Gastrocnemius medialis (tissue), 4 donors: ENCODE measurements at regions of chr10 and their contacts with region 1.

Region 1: GRCh38 chr10:71708301-71708703 is 11.3 kb downstream of the C10orf105 start:
- DNase-seq: no peak
- ATAC-seq: no peak
- H3K4me3 ChIP-seq: no peak overlapping the region
- H3K27ac ChIP-seq: no peak overlapping the region
- H3K4me1 ChIP-seq: peaks cover 11 to 14% of the 10 kb centered on the region in 2 donors
- H3K27me3 ChIP-seq: no peaks in the 10 kb centered on the region
- CTCF ChIP-seq: peak; percentile 71 to 84 (median 75)
- POLR2A ChIP-seq: no peak

Region 2: DNA sequence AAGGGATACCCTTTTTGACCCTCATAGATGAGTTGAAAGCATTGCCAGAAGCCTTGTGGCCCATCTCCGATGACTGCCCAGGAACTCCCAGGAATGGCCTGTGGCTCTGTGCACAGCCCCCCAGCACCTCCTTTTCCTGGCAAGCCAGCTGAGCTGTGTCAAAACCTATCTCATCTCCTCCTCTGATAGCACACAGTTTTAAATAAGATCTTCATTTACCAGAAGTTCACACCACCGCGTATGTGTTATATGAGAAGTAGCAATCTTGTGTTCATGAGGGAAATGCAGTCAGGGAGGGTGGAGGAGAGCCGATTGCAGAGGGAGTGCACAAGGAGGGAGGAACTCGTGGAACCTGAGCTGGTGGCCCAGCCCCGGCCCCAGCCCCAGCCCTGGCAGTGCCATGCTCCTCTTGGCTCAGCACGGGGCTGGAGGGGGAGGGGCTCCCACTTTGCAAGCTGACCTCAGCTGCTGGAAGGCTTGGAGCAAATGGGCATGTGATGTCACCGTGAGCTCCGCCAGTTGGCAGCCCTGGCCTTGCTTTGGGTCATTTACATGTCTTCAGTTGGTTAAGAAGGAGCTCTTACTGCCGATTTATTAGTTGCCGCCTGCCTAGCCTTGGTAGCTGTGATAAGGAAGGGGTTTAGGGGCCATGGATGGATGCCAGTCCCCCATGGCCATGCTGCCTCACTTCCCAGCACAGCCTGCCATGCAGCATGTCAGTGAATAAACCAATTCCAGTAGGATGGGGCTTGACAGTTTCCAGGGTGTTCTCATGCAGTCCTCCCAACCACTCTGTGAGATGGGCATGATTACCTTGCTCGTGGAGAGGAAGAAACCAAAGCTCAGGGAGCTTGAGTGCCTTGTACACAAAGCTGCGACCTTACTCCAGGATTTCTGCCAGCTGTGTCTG is 476.0 kb before region 1 on chr10:
- in situ Hi-C with region 1: no loop called
- intact Hi-C with region 1: no loop called
- DNase-seq: peak; percentile 90 to 97
- ATAC-seq: peak; percentile 91 to 95
- H3K4me3 ChIP-seq: peak overlapping the region in 2 of 4 donors; percentile 11
- H3K27ac ChIP-seq: peak overlapping the region; percentile 68 to 80 (median 72)
- H3K4me1 ChIP-seq: peaks cover 39 to 52% of the 10 kb centered on the region in 2 donors
- H3K27me3 ChIP-seq: no peaks in the 10 kb centered on the region
- CTCF ChIP-seq: no peak
- POLR2A ChIP-seq: no peak

Region 3: GRCh38 chr10:71812016-71812912 is 104.0 kb after region 1 on chr10:
- in situ Hi-C with region 1: no loop called
- intact Hi-C with region 1: loop called (anchors 5 kb)
- DNase-seq: peak in 1 of 2 donors; percentile 56
- ATAC-seq: peak; percentile 57 to 67
- H3K4me3 ChIP-seq: no peak overlapping the region
- H3K27ac ChIP-seq: no peak overlapping the region
- H3K4me1 ChIP-seq: peaks cover 0 to 12% of the 10 kb centered on the region in 2 donors
- H3K27me3 ChIP-seq: no peaks in the 10 kb centered on the region
- CTCF ChIP-seq: peak; percentile 79 to 90 (median 85)
- POLR2A ChIP-seq: no peak

Region 4: DNA sequence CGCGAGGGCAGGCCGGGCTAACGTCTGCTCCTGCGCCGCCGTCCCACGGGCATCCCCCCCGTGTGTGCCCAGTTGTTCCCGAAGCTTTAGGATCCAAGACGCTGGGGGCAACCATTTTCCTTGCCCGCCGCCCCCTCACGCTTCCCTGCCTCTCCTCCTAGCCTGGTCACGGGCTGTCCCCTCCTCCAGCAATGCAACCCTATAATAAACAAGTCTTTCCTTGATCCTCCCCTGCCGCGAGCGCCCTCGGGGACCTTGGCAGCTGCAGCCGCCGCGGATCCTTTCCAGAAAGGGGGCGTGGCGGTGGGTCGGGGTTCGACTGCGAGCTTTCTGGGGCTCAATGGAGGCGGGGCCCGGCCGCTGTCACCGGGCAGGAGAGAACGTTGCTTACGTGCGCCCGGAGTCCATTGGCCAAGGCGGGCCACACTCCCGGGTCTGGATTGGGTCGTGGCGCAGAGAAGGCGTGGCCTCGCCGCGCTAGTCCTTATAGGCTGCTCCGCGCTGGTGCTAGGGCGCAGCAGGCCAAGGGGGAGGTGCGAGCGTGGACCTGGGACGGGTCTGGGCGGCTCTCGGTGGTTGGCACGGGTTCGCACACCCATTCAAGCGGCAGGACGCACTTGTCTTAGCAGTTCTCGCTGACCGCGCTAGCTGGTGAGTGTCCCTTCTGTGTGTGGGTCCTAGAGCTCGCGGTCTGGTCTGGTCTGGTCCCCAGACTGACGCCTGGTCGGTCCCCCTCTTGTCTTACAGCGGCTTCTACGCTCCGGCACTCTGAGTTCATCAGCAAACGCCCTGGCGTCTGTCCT is 565.3 kb after region 1 on chr10 and contains the start of gene DDIT4:
- in situ Hi-C with region 1: no loop called
- intact Hi-C with region 1: no loop called
- DNase-seq: peak; percentile 100
- ATAC-seq: peak; percentile 54 to 61
- H3K4me3 ChIP-seq: peak within 1 kb of the TSS; percentile 89 to 99 (median 96)
- H3K27ac ChIP-seq: peak within 1 kb of the TSS; percentile 97 to 100 (median 99)
- H3K4me1 ChIP-seq: peaks cover 6 to 7% of the 10 kb centered on the region in 2 donors
- H3K27me3 ChIP-seq: no peaks in the 10 kb centered on the region
- CTCF ChIP-seq: no peak
- POLR2A ChIP-seq: peak; percentile 100
- total RNA-seq, gene DDIT4: 296 to 667 (median 319) TPM